Aorta (tissue), 5 donors: ENCODE measurements at regions of chr2 and their contacts with region 1.

Region 1: DNA sequence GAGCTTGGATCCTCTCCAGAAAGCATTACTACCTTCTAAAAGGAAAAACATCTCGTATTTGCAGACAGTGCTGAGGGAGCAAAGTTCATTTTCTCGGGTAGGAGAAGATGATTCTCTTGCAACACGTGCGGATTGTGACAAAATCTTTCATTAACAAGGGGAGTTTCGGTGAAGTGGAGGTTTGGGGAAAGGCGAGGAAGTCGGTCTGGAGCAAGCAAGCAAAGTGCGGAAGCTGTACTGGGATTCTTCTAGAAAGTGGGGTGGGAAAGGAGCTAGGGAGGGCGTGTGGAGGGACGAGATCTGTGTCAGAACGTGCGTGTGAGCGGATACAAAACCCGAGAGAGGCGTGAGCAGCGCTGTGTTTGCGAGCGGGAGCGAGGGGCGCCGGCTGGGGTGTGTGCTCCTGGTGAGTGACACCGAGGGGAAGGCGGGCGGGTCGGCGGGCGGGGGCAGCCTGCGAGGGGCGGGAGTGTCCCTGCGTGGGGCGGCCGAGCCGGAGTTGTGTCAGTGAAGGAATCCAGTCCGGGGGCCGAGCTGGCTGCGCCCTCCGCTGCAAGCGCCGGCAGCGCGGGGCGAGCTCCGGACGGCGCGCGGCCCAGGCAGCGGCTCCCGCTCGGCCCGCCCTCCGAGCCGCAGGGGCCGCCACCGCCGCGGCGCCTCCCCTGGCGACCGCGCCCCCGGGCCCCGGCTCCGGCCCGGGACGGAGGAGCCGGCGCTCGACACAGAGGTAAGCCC is at the start of gene SPATS2L:
- DNase-seq: peak; percentile 86 to 92
- ATAC-seq: peak; percentile 81
- H3K4me3 ChIP-seq: peak within 1 kb of the TSS; percentile 77 to 93
- H3K27ac ChIP-seq: peak within 1 kb of the TSS; percentile 69 to 74
- H3K4me1 ChIP-seq: peaks cover 0 to 2% of the 10 kb centered on the region in 2 donors
- H3K27me3 ChIP-seq: no peaks in the 10 kb centered on the region
- total RNA-seq, gene SPATS2L: 59.8 to 67.5 TPM

Region 2: DNA sequence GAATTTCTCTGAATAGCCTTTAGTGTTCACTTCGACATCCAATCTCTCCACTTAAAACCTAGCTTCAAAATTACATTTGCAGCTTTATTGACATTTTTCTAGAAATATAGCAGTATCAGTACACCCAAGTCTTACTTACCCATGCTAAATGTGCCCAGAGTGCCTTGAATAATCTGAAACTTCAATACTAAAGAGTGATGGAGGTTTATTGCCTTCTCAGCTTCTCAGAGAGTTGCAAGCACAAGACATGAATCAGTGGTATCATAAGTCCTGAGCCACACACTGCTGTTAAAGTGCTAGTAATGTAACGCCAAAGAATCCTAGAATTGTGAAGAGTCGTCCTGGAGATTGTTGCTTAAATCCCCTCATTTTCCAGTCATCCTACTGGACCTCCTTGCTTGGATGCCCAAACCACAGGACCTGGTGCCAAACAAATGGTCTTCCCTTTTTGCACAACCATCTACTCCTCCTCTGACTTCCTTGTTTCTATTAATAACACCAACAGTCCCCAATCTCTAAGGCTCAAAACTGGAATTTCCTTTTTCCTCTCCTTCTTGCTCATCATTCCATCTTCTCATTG is 83.1 kb before region 1 on chr2:
- intact Hi-C with region 1: no loop called
- DNase-seq: peak in 1 of 2 donors; percentile 48
- ATAC-seq: no peak
- H3K4me3 ChIP-seq: no peak overlapping the region
- H3K27ac ChIP-seq: no peak overlapping the region
- H3K4me1 ChIP-seq: no peaks in the 10 kb centered on the region
- H3K27me3 ChIP-seq: no peaks in the 10 kb centered on the region

Region 3: GRCh38 chr2:200378652-200379290 is 72.4 kb after region 1 on chr2:
- intact Hi-C with region 1: loop called in 1 of 2 experiments (anchors 2 kb)
- DNase-seq: no peak
- ATAC-seq: peak; percentile 57
- H3K4me3 ChIP-seq: no peak overlapping the region
- H3K27ac ChIP-seq: peak overlapping the region; percentile 8 to 60
- H3K4me1 ChIP-seq: peaks cover 3 to 20% of the 10 kb centered on the region in 2 donors
- H3K27me3 ChIP-seq: no peaks in the 10 kb centered on the region

Region 4: DNA sequence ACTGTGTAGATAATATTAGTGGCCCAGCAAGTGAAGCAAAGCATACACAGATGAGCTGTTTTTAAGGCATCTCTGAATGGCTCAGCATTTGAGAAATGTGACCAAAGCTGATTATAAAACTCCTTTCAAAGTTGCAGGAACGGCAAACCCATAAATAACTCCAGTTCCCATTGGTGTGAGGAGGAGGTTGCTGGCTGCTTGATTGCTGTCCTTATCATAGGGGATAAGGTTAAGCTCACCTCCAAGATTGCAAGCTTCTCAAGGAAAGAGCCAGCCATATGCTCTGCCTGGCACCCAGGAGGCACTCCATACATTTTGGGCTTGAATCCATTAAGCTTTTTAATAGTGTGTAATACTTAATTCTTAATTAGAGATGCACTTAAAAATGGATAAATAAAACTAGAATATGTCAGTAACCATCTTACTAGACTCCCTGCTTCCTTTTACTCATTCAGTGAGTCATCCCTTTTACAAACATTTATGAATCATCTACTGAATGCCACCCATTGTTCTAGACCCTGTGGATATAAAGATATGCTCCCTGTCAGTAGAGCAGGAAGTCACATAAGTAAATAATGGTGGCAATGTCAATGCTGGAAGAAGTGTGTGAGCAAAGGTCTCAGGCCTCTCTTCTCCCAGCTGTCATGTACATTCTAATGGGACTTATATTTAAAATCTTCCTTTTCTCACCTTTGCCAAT is 99.4 kb after region 1 on chr2:
- intact Hi-C with region 1: loop called in 1 of 2 experiments (anchors 10 kb)
- DNase-seq: no peak
- ATAC-seq: peak; percentile 42
- H3K4me3 ChIP-seq: no peak overlapping the region
- H3K27ac ChIP-seq: peak overlapping the region; percentile 6 to 40
- H3K4me1 ChIP-seq: peaks cover 2 to 13% of the 10 kb centered on the region in 2 donors
- H3K27me3 ChIP-seq: no peaks in the 10 kb centered on the region

Region 5: GRCh38 chr2:200471324-200471848 is 165.0 kb after region 1 on chr2:
- intact Hi-C with region 1: loop called in 1 of 2 experiments (anchors 10 kb)
- DNase-seq: no peak
- ATAC-seq: no peak
- H3K4me3 ChIP-seq: no peak overlapping the region
- H3K27ac ChIP-seq: no peak overlapping the region
- H3K4me1 ChIP-seq: no peaks in the 10 kb centered on the region
- H3K27me3 ChIP-seq: no peaks in the 10 kb centered on the region